ENCODE measurements at regions of chr13 and their contacts with region 1.

Region 1: DNA sequence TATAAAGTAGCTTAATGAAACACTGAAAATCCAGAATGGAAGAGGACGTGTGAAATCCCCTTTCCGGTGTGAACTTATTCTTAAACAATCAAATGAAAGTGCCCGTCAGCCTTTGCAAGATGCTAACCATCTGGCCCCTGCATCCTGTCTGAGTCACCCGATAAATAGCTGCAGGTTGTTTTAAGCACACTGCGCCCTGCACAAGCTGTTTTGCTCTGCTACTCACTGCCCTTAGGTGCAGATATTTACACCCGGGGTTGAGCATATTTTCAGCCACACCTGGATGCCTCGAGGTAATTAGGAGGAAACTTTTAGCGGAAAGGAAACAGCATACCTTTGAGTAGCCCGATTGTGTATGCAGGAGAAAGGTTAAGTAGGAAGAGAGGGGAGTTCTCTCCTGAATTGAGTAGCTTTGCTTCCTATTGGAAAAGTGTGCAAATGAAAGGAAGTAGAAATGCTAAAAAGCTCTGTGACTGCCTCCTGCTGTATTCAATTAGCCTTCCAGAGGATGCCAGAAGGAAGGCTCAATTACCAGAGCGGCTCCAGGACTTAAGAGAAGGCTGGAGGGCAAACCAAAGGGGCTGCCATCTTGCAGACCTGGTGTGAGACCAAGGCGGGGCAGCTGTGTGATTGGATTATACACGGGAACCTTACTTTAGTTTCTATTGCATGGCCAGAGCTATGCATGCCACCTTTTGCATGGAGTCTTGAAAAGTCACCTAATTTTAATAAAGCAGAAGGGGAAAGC is 42.5 kb downstream of the IRS2 start:
- DNase-seq: peak; percentile 92
- H3K4me3 ChIP-seq: peak overlapping the region; percentile 0
- H3K27ac ChIP-seq: peak overlapping the region; percentile 70
- H3K4me1 ChIP-seq: peaks cover 39% of the 10 kb centered on the region
- H3K27me3 ChIP-seq: no peaks in the 10 kb centered on the region
- CTCF ChIP-seq: peak; percentile 31; the same call in 1 of the 2 replicates

Region 2: GRCh38 chr13:109610517-109610916 is 133.4 kb before region 1 on chr13:
- CTCF ChIA-PET with region 1: no interaction called
- POLR2A ChIA-PET with region 1: interaction called, 3 read pairs
- intact Hi-C with region 1: loop called (anchors 5 kb)
- DNase-seq: peak; percentile 51
- H3K4me3 ChIP-seq: no peak overlapping the region
- H3K27ac ChIP-seq: no peak overlapping the region
- H3K4me1 ChIP-seq: peaks cover 2% of the 10 kb centered on the region
- H3K27me3 ChIP-seq: no peaks in the 10 kb centered on the region
- CTCF ChIP-seq: peak; percentile 61

Region 3: GRCh38 chr13:109684824-109685202 is 59.1 kb before region 1 on chr13:
- CTCF ChIA-PET with region 1: no interaction called
- POLR2A ChIA-PET with region 1: no interaction called
- intact Hi-C with region 1: no loop called
- DNase-seq: peak; percentile 68
- H3K4me3 ChIP-seq: peak overlapping the region; percentile 6
- H3K27ac ChIP-seq: peak overlapping the region; percentile 34
- H3K4me1 ChIP-seq: peaks cover 17% of the 10 kb centered on the region
- H3K27me3 ChIP-seq: no peaks in the 10 kb centered on the region
- CTCF ChIP-seq: no peak

Region 4: GRCh38 chr13:109700176-109700575 is 43.7 kb before region 1 on chr13:
- CTCF ChIA-PET with region 1: no interaction called
- POLR2A ChIA-PET with region 1: no interaction called
- intact Hi-C with region 1: loop called (anchors 2 kb)
- DNase-seq: peak; percentile 97
- H3K4me3 ChIP-seq: no peak overlapping the region
- H3K27ac ChIP-seq: peak overlapping the region; percentile 34
- H3K4me1 ChIP-seq: peaks cover 23% of the 10 kb centered on the region
- H3K27me3 ChIP-seq: no peaks in the 10 kb centered on the region
- CTCF ChIP-seq: no peak

Region 5: GRCh38 chr13:109892101-109892500 is 148.2 kb after region 1 on chr13:
- CTCF ChIA-PET with region 1: no interaction called
- POLR2A ChIA-PET with region 1: no interaction called
- intact Hi-C with region 1: no loop called
- DNase-seq: no peak
- H3K4me3 ChIP-seq: no peak overlapping the region
- H3K27ac ChIP-seq: no peak overlapping the region
- H3K4me1 ChIP-seq: no peaks in the 10 kb centered on the region
- H3K27me3 ChIP-seq: no peaks in the 10 kb centered on the region
- CTCF ChIP-seq: no peak

Measured in A673 (cell line).